Activated B cell treated with CpG ODN at 0.5 μM for 24 hours (primary cell): ENCODE measurements at regions of chr12 and their contacts with region 1.

Region 1: DNA sequence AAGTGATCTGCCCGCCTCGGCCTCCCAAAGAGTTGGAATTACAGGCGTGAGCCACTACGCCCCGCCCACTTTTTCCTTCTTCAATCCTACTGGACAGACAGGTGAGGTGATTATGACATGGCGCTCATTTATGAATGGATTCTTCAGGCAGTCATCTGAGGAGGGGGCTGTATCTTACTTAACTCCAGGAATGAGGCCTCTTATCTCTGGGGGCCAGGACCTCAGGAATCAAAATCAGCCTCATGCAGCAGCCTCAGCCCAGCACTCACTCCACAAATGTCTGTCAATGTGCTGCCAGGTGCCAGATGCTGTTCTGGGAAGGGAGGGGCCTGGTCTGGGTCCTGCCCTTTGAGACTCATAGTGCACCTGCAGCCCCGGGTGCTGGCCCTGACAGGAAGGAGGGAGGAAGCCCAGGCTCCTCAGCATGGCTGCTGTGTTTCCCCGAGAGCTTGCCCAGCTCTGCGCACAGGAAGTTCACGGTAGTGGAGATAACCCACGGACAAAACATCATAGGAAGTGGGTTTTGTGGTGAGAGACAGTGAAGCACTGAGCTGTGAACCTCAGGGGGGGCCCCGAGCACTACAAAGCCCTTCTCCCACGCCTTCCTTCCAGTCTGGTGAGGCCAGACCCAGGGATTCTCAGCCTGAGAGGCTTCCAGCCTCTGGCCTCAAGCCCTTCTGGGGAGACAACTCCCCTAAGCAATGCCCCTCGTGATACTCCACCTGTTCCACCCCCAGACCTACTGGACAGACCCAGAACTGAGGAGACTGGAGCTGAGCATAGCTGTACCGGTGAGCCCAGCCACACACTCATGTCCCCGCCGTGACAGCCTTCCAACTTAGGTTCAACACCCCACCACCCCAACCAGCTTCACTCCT is 22.3 kb downstream of the GALNT6 start:
- DNase-seq: peak; percentile 81
- ATAC-seq: peak; percentile 95
- H3K4me3 Mint-ChIP-seq: peak overlapping the region; percentile 80
- H3K27ac Mint-ChIP-seq: peak overlapping the region; percentile 90
- H3K4me1 Mint-ChIP-seq: peaks cover 65% of the 10 kb centered on the region
- H3K27me3 Mint-ChIP-seq: no peaks in the 10 kb centered on the region
- CTCF ChIP-seq: no peak

Region 2: GRCh38 chr12:50763639-50764285 is 605.1 kb before region 1 on chr12 and contains the start of gene ATF1:
- CTCF ChIA-PET with region 1: no interaction called
- POLR2A ChIA-PET with region 1: interaction called, 12 read pairs
- intact Hi-C with region 1: no loop called
- DNase-seq: peak; percentile 89
- ATAC-seq: peak; percentile 80
- H3K4me3 Mint-ChIP-seq: peak within 1 kb of the TSS; percentile 95
- H3K27ac Mint-ChIP-seq: peak within 1 kb of the TSS; percentile 96
- H3K4me1 Mint-ChIP-seq: peaks cover 36% of the 10 kb centered on the region
- H3K27me3 Mint-ChIP-seq: no peaks in the 10 kb centered on the region
- CTCF ChIP-seq: no peak
- total RNA-seq, gene ATF1: 37.7 and 42.5 TPM in 2 replicates

Region 3: GRCh38 chr12:51238510-51239334 is 130.2 kb before region 1 on chr12 and contains the start of gene DAZAP2:
- CTCF ChIA-PET with region 1: no interaction called
- POLR2A ChIA-PET with region 1: interaction called, 15 read pairs
- intact Hi-C with region 1: no loop called
- DNase-seq: peak; percentile 89
- ATAC-seq: peak; percentile 91
- H3K4me3 Mint-ChIP-seq: peak within 1 kb of the TSS; percentile 98
- H3K27ac Mint-ChIP-seq: peak within 1 kb of the TSS; percentile 100
- H3K4me1 Mint-ChIP-seq: peaks cover 43% of the 10 kb centered on the region
- H3K27me3 Mint-ChIP-seq: no peaks in the 10 kb centered on the region
- CTCF ChIP-seq: no peak
- total RNA-seq, gene DAZAP2: 209 and 214 TPM in 2 replicates

Region 4: GRCh38 chr12:51351913-51352532 is 16.9 kb before region 1 on chr12:
- CTCF ChIA-PET with region 1: interaction called, 4 read pairs
- POLR2A ChIA-PET with region 1: interaction called, 63 read pairs
- intact Hi-C with region 1: loop called (anchors 1 kb)
- DNase-seq: no peak
- ATAC-seq: no peak
- H3K4me3 Mint-ChIP-seq: no peak overlapping the region
- H3K27ac Mint-ChIP-seq: no peak overlapping the region
- H3K4me1 Mint-ChIP-seq: peaks cover 8% of the 10 kb centered on the region
- H3K27me3 Mint-ChIP-seq: no peaks in the 10 kb centered on the region
- CTCF ChIP-seq: no peak

Region 5: DNA sequence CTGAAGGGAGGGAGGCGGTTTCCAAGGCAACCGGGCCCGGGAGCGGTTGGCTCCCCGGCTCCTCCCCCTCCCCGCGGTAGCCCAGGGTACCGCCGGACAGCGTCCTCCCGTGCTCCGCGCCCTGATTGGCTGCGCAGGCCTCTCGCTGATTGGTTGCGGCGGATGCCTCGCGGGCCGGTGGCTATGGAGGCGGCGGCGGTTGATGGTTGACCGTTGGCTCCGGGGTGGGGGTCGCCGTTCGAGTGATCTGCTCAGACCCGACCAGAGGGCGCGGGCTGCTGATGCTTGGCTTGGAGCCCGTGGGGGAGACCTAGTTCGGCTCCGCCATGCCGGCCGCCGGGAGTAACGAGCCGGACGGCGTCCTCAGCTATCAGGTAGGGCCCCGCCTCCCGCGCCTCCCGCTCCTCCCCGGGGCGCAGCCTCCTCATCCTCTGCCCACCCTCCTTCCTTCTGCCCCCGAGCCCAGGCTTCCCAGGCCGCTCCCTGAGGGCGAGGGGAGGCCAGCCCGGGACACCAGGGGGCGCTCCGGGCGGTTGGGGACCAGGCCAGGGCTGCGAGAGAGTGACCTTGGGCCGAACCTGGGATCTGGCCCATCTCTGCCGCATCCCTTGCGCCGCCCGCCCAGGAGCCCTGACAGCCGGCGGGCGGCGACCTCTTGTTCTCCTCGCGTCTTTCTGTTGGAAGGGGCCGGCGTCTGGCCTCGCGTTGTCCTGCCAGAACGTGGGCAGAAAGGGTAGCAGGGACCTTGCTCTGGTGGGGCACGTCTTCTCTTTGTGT is 56.0 kb after region 1 on chr12 and contains the start of gene SLC4A8:
- CTCF ChIA-PET with region 1: interaction called, 3 read pairs
- POLR2A ChIA-PET with region 1: no interaction called
- intact Hi-C with region 1: loop called (anchors 2 kb)
- DNase-seq: peak; percentile 75
- ATAC-seq: peak; percentile 92
- H3K4me3 Mint-ChIP-seq: peak within 1 kb of the TSS; percentile 83
- H3K27ac Mint-ChIP-seq: peak within 1 kb of the TSS; percentile 25
- H3K4me1 Mint-ChIP-seq: peaks cover 16% of the 10 kb centered on the region
- H3K27me3 Mint-ChIP-seq: no peaks in the 10 kb centered on the region
- CTCF ChIP-seq: no peak
- total RNA-seq, gene SLC4A8: 5.2 and 5.8 TPM in 2 replicates

Region 6: DNA sequence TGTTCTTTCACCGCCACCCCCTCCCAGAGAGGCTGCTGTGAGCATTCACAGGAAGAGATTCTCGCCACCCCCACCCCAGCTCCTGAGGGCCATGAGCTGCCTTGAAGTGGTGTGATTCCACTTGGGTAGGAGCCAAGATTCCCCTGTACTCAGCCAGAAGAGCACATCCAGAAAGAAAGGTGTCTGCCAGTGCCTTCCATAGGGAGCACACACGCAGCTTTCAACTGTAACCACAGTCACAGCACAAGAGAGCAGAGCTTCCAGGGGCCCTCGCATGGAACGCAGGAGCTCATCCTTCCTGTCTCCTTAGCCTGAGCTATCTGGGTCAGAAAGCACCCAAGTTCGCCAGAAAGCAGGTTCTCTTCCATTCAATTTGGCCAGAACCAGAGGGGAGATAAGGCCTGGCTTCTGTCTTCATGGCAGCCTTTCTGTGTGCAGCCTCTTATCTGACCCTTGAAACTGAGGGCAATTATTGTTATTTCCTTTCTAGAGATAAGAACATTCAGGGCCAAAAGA is 155.6 kb after region 1 on chr12:
- CTCF ChIA-PET with region 1: no interaction called
- POLR2A ChIA-PET with region 1: no interaction called
- intact Hi-C with region 1: no loop called
- DNase-seq: no peak
- ATAC-seq: no peak
- H3K4me3 Mint-ChIP-seq: no peak overlapping the region
- H3K27ac Mint-ChIP-seq: no peak overlapping the region
- H3K4me1 Mint-ChIP-seq: no peaks in the 10 kb centered on the region
- H3K27me3 Mint-ChIP-seq: peaks cover 6% of the 10 kb centered on the region
- CTCF ChIP-seq: no peak

Region 7: DNA sequence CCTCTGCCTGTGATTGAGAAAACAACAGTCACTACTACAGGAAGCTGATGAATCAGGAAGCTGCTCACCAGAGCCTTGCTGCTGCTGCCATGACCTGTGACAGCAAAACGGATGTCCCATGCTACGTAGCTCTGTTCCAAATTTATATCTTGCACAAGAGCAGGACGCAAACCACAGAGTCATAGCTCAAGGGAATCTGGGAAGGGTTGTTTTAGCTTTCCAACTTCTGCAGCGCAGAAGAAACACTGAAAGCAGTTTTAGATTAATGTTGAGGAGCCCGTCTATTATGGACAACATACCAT is 517.1 kb after region 1 on chr12:
- CTCF ChIA-PET with region 1: no interaction called
- POLR2A ChIA-PET with region 1: no interaction called
- intact Hi-C with region 1: no loop called
- DNase-seq: no peak
- ATAC-seq: peak; percentile 94
- H3K4me3 Mint-ChIP-seq: peak overlapping the region; percentile 51
- H3K27ac Mint-ChIP-seq: peak overlapping the region; percentile 74
- H3K4me1 Mint-ChIP-seq: peaks cover 11% of the 10 kb centered on the region
- H3K27me3 Mint-ChIP-seq: no peaks in the 10 kb centered on the region
- CTCF ChIP-seq: no peak

Region 8: DNA sequence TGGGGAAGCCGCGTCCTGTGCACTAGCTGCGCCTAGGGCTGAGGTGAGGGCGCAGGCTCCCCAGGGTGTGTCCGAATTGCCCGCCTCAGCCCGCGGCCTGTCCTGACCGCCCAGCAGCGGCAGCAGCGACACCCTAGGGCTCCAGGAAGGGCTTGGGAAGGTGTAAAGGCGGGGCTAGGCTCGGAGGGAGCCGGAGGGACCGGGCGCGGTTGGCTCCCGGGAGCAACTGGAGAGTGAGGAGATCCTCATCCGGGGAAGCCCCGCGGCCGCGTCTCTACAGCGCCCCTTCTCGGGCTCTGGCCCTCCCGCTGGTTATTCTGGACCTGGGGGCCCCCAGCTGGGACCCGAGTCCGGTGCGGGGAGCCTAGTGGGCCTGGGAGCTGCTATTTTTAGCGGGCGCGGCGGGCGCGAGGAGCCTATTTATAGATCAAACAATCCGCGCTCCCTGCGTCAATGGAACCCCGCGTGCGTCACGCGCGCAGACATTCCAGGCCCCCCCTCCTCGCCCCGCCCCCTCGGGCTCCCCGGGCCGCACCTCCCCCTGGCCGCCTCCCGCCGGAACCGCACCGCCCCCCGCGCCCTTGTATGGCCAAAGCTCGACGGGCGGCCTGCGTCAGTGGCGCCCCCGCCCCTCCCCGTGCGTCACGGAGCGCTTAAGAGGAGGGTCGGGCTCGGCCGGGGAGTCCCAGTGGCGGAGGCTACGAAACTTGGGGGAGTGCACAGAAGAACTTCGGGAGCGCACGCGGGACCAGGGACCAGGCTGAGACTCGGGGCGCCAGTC is 682.1 kb after region 1 on chr12 and contains the start of gene NR4A1:
- CTCF ChIA-PET with region 1: no interaction called
- POLR2A ChIA-PET with region 1: no interaction called
- intact Hi-C with region 1: loop called (anchors 5 kb)
- DNase-seq: peak; percentile 100
- ATAC-seq: peak; percentile 82
- H3K4me3 Mint-ChIP-seq: peak within 1 kb of the TSS; percentile 92
- H3K27ac Mint-ChIP-seq: peak within 1 kb of the TSS; percentile 95
- H3K4me1 Mint-ChIP-seq: peaks cover 49% of the 10 kb centered on the region
- H3K27me3 Mint-ChIP-seq: no peaks in the 10 kb centered on the region
- CTCF ChIP-seq: no peak
- total RNA-seq, gene NR4A1: 18.8 and 24.2 TPM in 2 replicates